Left ventricle myocardium superior (tissue), 1 donor: ENCODE measurements at regions of chr17 and their contacts with region 1.

Region 1: GRCh38 chr17:33294994-33295393 is 1.9 kb upstream of the ASIC2 start:
- DNase-seq: no peak
- ATAC-seq: no peak

Region 2: DNA sequence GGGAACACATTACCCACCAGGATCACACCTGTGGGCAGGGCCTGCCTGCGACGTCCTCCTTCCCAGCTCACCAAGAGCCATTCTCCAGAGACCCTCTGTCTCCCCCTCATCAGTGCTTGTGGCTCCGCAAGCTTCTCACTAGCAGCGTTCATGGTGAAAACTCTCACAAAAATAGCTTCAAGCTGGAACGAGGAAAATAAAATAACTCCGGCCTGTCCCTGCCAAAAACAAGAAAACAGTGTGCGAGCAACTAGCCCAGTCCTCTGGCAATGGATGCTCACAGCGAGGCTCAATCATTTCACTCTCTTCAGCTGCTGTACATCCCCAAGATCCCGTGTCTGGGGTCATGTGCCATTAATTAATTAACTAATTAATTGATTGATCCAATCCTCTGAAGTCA is 285.4 kb before region 1 on chr17:
- intact Hi-C with region 1: no loop called
- DNase-seq: no peak
- ATAC-seq: no peak

Region 3: GRCh38 chr17:33225509-33225908 is 69.5 kb before region 1 on chr17:
- intact Hi-C with region 1: loop called (anchors 2 kb)
- DNase-seq: peak; percentile 49
- ATAC-seq: peak; percentile 70